PC-9 (cell line): ENCODE measurements at regions of chr1 and their contacts with region 1.

Region 1: DNA sequence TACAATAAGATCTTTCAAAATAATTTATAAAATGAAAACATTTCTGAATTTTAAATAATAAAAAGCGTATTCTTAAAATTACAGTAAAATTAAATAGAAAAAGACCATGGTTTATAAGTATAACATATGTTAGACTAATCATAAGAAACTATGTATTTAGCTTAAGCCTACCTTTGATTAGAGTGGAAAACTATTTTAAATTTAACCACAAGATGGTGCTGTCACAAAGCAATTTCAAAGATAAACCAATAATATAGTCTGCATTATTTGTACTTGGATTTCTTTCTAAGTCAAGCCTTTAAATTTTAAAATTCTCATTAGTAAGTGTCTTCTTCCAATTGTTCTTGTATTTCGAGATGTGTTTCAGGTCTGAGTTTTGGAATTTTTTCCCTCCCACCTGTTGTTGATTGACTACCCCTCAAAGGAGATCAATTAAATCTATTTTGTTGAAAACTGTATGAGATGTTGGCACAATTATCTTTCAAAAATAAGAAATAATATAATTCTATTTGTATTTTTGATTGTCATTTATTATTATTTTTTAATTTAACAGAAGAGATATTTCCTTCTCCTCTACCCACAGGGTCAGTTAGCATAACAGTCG is 459.8 kb downstream of the KCNT2 start:
- DNase-seq: no peak
- H3K4me3 ChIP-seq: no peak overlapping the region
- H3K27ac ChIP-seq: no peak overlapping the region
- H3K4me1 ChIP-seq: no peaks in the 10 kb centered on the region
- H3K27me3 ChIP-seq: no peaks in the 10 kb centered on the region
- CTCF ChIP-seq: peak; percentile 76

Region 2: GRCh38 chr1:195939844-195940243 is 208.6 kb before region 1 on chr1:
- CTCF ChIA-PET with region 1: no interaction called
- POLR2A ChIA-PET with region 1: no interaction called
- intact Hi-C with region 1: loop called (anchors 10 kb)
- DNase-seq: no peak
- H3K4me3 ChIP-seq: no peak overlapping the region
- H3K27ac ChIP-seq: no peak overlapping the region
- H3K4me1 ChIP-seq: no peaks in the 10 kb centered on the region
- H3K27me3 ChIP-seq: no peaks in the 10 kb centered on the region
- CTCF ChIP-seq: no peak; the same call in 1 of the 2 replicates

Region 3: GRCh38 chr1:196121181-196121580 is 27.3 kb before region 1 on chr1:
- CTCF ChIA-PET with region 1: no interaction called
- POLR2A ChIA-PET with region 1: no interaction called
- intact Hi-C with region 1: no loop called
- DNase-seq: no peak
- H3K4me3 ChIP-seq: no peak overlapping the region
- H3K27ac ChIP-seq: no peak overlapping the region
- H3K4me1 ChIP-seq: no peaks in the 10 kb centered on the region
- H3K27me3 ChIP-seq: no peaks in the 10 kb centered on the region
- CTCF ChIP-seq: no peak

Region 4: GRCh38 chr1:196309386-196309785 is 160.9 kb after region 1 on chr1:
- CTCF ChIA-PET with region 1: no interaction called
- POLR2A ChIA-PET with region 1: no interaction called
- intact Hi-C with region 1: loop called (anchors 2 kb)
- DNase-seq: no peak
- H3K4me3 ChIP-seq: no peak overlapping the region
- H3K27ac ChIP-seq: no peak overlapping the region
- H3K4me1 ChIP-seq: peaks cover 7% of the 10 kb centered on the region; the same call in 1 of the 2 replicates
- H3K27me3 ChIP-seq: no peaks in the 10 kb centered on the region
- CTCF ChIP-seq: peak; percentile 54

Region 5: GRCh38 chr1:197024460-197024859 is 876.0 kb after region 1 on chr1:
- CTCF ChIA-PET with region 1: no interaction called
- POLR2A ChIA-PET with region 1: no interaction called
- intact Hi-C with region 1: no loop called
- DNase-seq: peak in 1 of 2 experiments; percentile 71
- H3K4me3 ChIP-seq: no peak overlapping the region
- H3K27ac ChIP-seq: peak overlapping the region; percentile 34; the same call in 1 of the 2 replicates
- H3K4me1 ChIP-seq: peaks cover 24% of the 10 kb centered on the region
- H3K27me3 ChIP-seq: no peaks in the 10 kb centered on the region
- CTCF ChIP-seq: no peak